ENCODE measurements at regions of chr9 and their contacts with region 1.

Region 1: DNA sequence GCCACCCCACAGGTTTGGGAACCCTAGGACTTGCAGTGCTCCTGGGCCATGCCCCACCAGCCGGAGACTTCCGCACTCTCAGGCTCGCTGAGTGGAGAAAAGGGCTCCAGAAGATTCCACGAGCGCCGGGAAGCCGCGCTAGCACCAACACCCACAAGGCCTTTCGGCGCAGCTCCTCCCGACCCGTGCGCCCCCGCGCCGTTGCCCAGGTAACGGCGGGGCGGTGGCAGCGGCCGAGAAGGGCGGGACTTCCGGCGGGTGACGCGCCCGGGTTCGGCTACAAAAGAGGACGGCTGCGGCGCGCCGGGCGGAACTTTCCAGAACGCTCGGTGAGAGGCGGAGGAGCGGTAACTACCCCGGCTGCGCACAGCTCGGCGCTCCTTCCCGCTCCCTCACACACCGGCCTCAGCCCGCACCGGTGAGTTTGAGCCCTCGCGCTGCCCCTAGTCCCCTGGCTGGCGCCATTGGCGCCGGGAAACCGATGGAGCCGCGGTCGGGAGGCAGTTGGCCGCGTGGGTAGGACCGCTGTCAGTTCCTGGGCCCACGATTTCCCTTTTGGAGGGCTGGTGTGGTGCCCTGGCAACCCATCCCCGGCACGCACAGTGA is at the start of gene DNAJA1:
- DNase-seq: peak; percentile 97
- ATAC-seq: peak; percentile 79 to 92 (median 82)
- H3K4me3 ChIP-seq: peak within 1 kb of the TSS; percentile 96
- H3K4me3 Mint-ChIP-seq: peak within 1 kb of the TSS; percentile 92
- H3K27ac ChIP-seq: peak within 1 kb of the TSS; percentile 97
- H3K27ac Mint-ChIP-seq: peak within 1 kb of the TSS; percentile 98 to 99
- H3K4me1 ChIP-seq: peaks cover 26% of the 10 kb centered on the region
- H3K4me1 Mint-ChIP-seq: peaks cover 54 to 57% of the 10 kb centered on the region in 2 donors
- H3K27me3 ChIP-seq: no peaks in the 10 kb centered on the region
- H3K27me3 Mint-ChIP-seq: no peaks in the 10 kb centered on the region
- CTCF ChIP-seq: no peak
- total RNA-seq, gene DNAJA1: 150 to 244 (median 192) TPM

Region 2: GRCh38 chr9:33076358-33077004 is 51.4 kb after region 1 on chr9 and contains the start of gene SMU1:
- intact Hi-C with region 1: loop called (anchors 5 kb)
- DNase-seq: peak; percentile 90 to 98
- ATAC-seq: peak; percentile 94 to 99 (median 95)
- H3K4me3 ChIP-seq: peak within 1 kb of the TSS; percentile 53
- H3K4me3 Mint-ChIP-seq: peak within 1 kb of the TSS; percentile 96
- H3K27ac ChIP-seq: peak within 1 kb of the TSS; percentile 88
- H3K27ac Mint-ChIP-seq: peak within 1 kb of the TSS; percentile 93 to 99
- H3K4me1 ChIP-seq: peaks cover 17% of the 10 kb centered on the region
- H3K4me1 Mint-ChIP-seq: peaks cover 22 to 23% of the 10 kb centered on the region in 2 donors
- H3K27me3 ChIP-seq: no peaks in the 10 kb centered on the region
- H3K27me3 Mint-ChIP-seq: no peaks in the 10 kb centered on the region
- CTCF ChIP-seq: no peak
- total RNA-seq, gene SMU1: 21.9 to 23.2 (median 22.1) TPM